ENCODE measurements at regions of chr1 and their contacts with region 1.

Region 1: GRCh38 chr1:25520446-25521061 is 22.9 kb upstream of the LDLRAP1 start:
- DNase-seq: peak in 1 of 2 experiments; percentile 77
- H3K4me3 ChIP-seq: no peak overlapping the region
- H3K27ac ChIP-seq: no peak overlapping the region
- H3K4me1 ChIP-seq: peaks cover 4 to 8% (median 4%) of the 10 kb centered on the region in 4 experiments; a peak in 6 of 7 replicates
- H3K27me3 ChIP-seq: no peaks in the 10 kb centered on the region; a peak in 1 of 7 replicates
- CTCF ChIP-seq: peak in 2 of 3 experiments; percentile 63 to 76; a peak in 3 of 4 replicates
- EP300 ChIP-seq: no peak
- POLR2A ChIP-seq: no peak
- RAD21 ChIP-seq: peak; percentile 51 to 64

Region 2: DNA sequence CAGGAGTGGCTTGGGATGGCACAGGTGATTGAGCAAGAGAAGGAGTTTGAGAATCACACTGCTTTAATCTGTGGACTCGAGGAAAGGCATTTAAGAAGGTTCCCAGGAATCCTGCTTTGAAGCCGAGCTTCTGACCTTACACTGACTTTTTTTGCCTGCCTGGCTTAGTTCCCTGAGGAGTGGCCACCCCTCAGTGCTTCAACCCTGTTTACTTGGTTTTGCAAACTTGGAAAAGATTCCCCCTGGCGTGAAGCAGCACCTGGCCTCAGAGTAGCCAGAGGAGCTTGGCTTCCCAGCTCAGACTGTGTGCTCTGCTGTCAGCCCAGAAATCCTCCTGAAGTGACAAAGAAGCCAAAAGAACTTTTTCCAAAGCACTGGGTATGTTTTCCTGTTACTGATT is 25.6 kb before region 1 on chr1:
- CTCF ChIA-PET with region 1: interaction called, 53 read pairs
- POLR2A ChIA-PET with region 1: no interaction called
- DNase-seq: no peak
- H3K4me3 ChIP-seq: no peak overlapping the region
- H3K27ac ChIP-seq: no peak overlapping the region
- H3K4me1 ChIP-seq: peaks cover 0 to 3% (median 1%) of the 10 kb centered on the region in 4 experiments; a peak in 3 of 7 replicates
- H3K27me3 ChIP-seq: no peaks in the 10 kb centered on the region
- CTCF ChIP-seq: no peak
- EP300 ChIP-seq: no peak
- POLR2A ChIP-seq: no peak
- RAD21 ChIP-seq: no peak

Region 3: DNA sequence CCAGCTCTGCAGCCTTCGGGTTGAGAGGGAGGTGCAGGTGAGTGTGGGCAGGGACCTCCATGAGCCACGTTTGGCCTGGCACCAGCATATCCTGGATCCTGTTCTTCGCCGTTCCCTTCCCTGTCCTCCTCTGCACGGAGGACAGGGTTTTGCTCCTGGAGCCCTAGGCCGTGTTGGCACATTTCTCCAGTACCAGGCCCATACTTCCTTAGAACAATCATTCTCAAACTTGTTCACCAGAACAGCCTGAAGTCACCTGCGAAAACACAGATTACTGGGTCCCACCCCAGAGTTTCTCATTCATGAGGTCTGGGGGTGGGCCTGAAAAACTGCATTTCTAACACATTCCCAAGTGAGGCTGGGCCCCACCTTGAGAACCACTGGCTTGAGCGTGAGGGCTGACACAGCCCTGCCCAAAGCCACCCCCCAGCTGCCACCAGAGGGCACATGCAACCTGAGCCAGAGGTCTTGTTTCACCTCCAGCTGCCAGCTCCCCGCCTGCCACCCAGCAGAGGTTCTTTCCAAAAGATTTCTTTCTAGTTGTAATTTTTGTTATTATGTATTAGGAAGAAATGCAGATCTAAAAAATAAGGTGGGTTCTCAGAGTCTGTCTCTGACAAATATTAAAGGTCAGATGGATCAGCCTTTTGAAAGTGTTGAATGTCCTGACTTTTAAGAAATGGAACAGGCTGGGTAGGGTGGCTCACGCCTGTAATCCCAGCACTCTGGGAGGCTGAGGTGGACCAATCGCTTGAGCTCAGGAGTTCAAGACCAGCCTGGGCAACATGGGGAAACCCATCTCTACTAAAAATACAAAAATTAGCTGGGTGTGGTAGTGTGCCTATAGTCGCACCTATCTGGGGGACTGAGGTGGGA is 16.8 kb before region 1 on chr1:
- CTCF ChIA-PET with region 1: interaction called, 240 read pairs
- POLR2A ChIA-PET with region 1: interaction called, 16 read pairs
- DNase-seq: peak; percentile 68 to 80
- H3K4me3 ChIP-seq: no peak overlapping the region
- H3K27ac ChIP-seq: no peak overlapping the region
- H3K4me1 ChIP-seq: peaks cover 8 to 17% (median 11%) of the 10 kb centered on the region in 4 experiments
- H3K27me3 ChIP-seq: no peaks in the 10 kb centered on the region
- CTCF ChIP-seq: peak; percentile 78 to 91 (median 87)
- EP300 ChIP-seq: no peak
- POLR2A ChIP-seq: no peak
- RAD21 ChIP-seq: peak; percentile 77 to 78

Region 4: GRCh38 chr1:25538191-25538761 is 17.7 kb after region 1 on chr1:
- CTCF ChIA-PET with region 1: interaction called, 28 read pairs
- POLR2A ChIA-PET with region 1: interaction called, 3 read pairs
- DNase-seq: no peak
- H3K4me3 ChIP-seq: no peak overlapping the region
- H3K27ac ChIP-seq: no peak overlapping the region
- H3K4me1 ChIP-seq: peaks cover 0 to 9% (median 4%) of the 10 kb centered on the region in 4 experiments; a peak in 5 of 7 replicates
- H3K27me3 ChIP-seq: no peaks in the 10 kb centered on the region
- CTCF ChIP-seq: no peak
- EP300 ChIP-seq: no peak
- POLR2A ChIP-seq: no peak
- RAD21 ChIP-seq: no peak

Region 5: DNA sequence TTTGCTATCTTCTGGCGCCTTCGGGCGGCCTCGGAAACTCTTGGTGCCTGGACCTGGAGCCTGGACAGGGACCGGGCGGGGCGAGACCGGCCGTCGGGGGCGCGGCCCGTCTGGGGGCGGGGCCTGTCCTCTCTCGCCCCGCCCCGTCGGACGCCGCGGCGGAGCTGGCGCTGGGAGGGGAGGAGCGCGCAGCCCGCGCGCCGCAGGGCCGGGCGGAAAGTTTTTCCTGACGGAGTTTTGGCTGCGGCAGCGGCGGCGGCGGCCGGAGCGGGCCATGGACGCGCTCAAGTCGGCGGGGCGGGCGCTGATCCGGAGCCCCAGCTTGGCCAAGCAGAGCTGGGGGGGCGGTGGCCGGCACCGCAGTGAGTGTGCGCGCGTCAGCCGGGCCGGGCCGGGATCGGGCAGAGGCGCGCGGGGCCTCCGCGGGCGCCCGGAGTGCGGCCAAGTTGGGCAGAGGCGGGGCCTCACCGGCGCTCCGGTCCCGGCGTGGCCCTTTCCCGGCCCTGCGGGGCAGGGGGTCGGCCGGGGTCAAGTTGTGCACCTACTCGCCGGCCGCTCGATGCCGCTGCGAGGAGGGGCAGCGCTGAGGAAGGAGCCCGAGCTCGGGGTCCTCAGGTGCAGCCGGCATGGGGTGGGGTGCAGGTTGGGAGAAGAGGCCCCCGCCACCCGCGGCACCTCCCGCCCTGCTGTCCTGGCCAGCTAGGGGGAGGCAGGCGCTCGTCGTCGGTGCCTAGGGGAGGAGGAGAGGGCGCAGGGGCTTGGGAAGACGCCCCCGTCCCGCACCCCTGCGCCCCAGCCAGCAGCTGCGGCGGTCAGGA is 23.1 kb after region 1 on chr1 and contains the start of gene LDLRAP1:
- CTCF ChIA-PET with region 1: interaction called, 28 read pairs
- POLR2A ChIA-PET with region 1: no interaction called
- DNase-seq: peak; percentile 21 to 87
- H3K4me3 ChIP-seq: peak within 1 kb of the TSS; percentile 63 to 79 (median 66)
- H3K27ac ChIP-seq: no peak within 1 kb of the TSS; the same call in 1 of the 2 replicates
- H3K4me1 ChIP-seq: peaks cover 0 to 9% (median 5%) of the 10 kb centered on the region in 4 experiments; a peak in 4 of 7 replicates
- H3K27me3 ChIP-seq: peaks cover 0 to 5% (median 3%) of the 10 kb centered on the region in 4 experiments; a peak in 5 of 7 replicates
- CTCF ChIP-seq: no peak
- EP300 ChIP-seq: no peak
- POLR2A ChIP-seq: peak in 1 of 2 experiments; percentile 47; a peak in 1 of 3 replicates
- RAD21 ChIP-seq: peak in 1 of 2 experiments; percentile 5; a peak in 1 of 4 replicates
- total RNA-seq, gene LDLRAP1: 12.8 and 14.0 TPM in 2 replicates

Measured in H1 (cell line).